ENCODE measurements at regions of chr4 and their contacts with region 1.

Region 1: DNA sequence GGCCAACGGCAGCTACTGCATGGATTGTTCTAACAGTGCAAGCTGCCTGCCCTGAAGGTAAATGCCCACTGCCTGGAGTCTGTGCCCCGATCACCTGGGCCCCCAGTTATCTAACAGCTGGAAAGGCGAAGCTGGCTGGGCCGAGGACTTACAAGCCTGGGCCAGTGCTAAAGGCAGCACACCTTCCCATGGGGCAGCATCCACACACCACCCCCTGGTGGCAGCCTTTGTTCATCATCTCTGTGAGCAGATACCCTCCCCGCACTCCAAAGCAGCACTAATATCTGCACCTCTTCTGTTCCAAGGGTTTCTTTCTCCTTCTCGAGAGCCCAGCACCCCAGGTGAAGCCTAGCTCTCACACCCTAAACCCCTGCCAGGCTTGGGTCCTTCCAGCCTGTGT is 7.6 kb downstream of the SLC2A9 start:
- H3K4me3 ChIP-seq: no peak overlapping the region
- H3K27ac ChIP-seq: no peak overlapping the region
- H3K4me1 ChIP-seq: no peaks in the 10 kb centered on the region
- CTCF ChIP-seq: peak; percentile 27; the same call in 1 of the 2 replicates

Region 2: GRCh38 chr4:9704551-9705332 is 309.0 kb before region 1 on chr4:
- CTCF ChIA-PET with region 1: interaction called, 31 read pairs
- POLR2A ChIA-PET with region 1: no interaction called
- H3K4me3 ChIP-seq: no peak overlapping the region
- H3K27ac ChIP-seq: no peak overlapping the region
- H3K4me1 ChIP-seq: no peaks in the 10 kb centered on the region
- CTCF ChIP-seq: no peak

Region 3: DNA sequence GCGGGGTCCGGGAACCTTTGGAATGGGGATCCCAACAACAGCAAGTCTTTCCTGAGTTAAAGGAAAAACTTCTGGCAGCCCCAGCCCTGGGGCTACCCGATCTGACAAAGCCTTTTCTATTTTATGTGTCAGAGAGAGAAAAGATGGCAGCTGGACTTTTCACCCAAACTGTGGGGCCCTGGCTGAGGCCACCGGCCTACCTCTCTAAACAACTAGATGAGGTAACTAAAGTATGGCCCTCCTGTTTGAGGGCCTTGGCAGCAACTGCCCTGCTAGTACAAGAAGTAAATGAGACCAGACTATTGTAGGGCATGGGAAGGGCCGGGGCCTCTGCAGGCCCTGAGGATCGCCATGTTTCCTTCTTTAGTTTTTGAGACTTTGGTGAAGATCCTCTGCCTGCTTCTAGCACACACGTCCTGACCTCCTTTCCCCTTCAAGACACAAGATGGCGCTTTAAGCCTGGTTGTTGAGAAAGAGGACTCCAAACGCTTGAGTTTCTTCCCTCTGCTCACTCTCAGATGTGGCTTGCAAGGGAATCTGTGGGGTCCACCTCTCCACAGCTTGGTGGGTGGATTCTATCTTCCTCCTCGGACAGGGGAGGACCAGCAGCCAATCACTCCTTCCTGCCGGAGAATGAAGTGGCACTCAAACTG is 250.8 kb before region 1 on chr4:
- CTCF ChIA-PET with region 1: interaction called, 75 read pairs
- POLR2A ChIA-PET with region 1: no interaction called
- H3K4me3 ChIP-seq: no peak overlapping the region
- H3K27ac ChIP-seq: no peak overlapping the region
- H3K4me1 ChIP-seq: no peaks in the 10 kb centered on the region
- CTCF ChIP-seq: no peak; the same call in 1 of the 2 replicates

Region 4: GRCh38 chr4:9898596-9899305 is 115.0 kb before region 1 on chr4:
- CTCF ChIA-PET with region 1: interaction called, 18 read pairs
- POLR2A ChIA-PET with region 1: no interaction called
- H3K4me3 ChIP-seq: no peak overlapping the region
- H3K27ac ChIP-seq: no peak overlapping the region
- H3K4me1 ChIP-seq: no peaks in the 10 kb centered on the region
- CTCF ChIP-seq: peak; percentile 56